PC-3 (cell line): ENCODE measurements at regions of chr14 and their contacts with region 1.

Region 1: GRCh38 chr14:59422069-59422881 is 42.9 kb downstream of the GPR135 start:
- DNase-seq: peak; percentile 62
- ATAC-seq: peak; percentile 39; the same call in 1 of the 2 replicates
- H3K4me3 ChIP-seq: no peak overlapping the region
- H3K27ac ChIP-seq: no peak overlapping the region
- H3K4me1 ChIP-seq: no peaks in the 10 kb centered on the region
- H3K27me3 ChIP-seq: no peaks in the 10 kb centered on the region
- CTCF ChIP-seq: peak; percentile 97

Region 2: GRCh38 chr14:59262717-59263454 is 159.4 kb before region 1 on chr14:
- CTCF ChIA-PET with region 1: no interaction called
- POLR2A ChIA-PET with region 1: no interaction called
- intact Hi-C with region 1: loop called (anchors 5 kb)
- DNase-seq: peak; percentile 77
- ATAC-seq: peak; percentile 99
- H3K4me3 ChIP-seq: no peak overlapping the region
- H3K27ac ChIP-seq: no peak overlapping the region
- H3K4me1 ChIP-seq: peaks cover 23% of the 10 kb centered on the region
- H3K27me3 ChIP-seq: no peaks in the 10 kb centered on the region
- CTCF ChIP-seq: peak; percentile 84

Region 3: DNA sequence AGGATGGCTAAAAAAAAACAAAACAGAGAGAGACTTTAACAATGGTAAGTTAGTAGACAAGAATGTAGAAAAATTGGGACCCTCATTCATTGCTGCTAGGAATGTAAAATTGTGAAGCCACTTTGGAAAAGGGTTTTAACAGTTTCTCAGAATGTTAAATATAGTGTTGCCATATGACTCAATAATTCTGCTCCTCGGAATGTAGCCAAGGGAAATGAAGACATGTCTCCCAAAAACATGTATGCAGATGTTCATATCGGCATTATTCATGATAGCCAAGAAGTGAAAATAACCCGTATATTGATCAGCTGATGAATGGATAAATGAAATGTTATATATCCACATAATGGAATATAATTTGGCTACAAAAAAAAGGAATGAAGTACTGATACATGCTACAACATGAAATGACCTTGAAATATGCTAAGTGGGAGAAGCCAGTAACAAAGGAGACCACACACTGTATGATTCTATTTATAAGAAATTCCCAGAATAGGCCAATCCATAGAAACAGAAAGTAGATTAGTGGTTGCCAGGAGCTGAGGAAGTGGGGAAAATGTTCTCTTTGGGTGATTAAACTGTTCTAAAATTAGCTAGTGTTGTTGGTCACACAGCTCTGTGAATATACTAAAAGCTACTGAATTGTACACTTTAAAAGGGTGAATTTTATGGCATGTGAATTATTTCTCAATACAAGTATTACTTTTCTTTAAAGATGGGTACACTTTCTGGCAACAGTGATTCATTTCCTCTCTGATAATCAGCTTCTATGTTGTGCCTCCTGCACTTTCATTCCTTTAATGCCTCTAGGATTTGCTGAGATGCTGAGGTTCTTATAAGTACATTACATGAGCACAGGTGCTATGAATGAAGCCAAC is 101.3 kb before region 1 on chr14:
- CTCF ChIA-PET with region 1: no interaction called
- POLR2A ChIA-PET with region 1: no interaction called
- intact Hi-C with region 1: loop called (anchors 2 kb)
- DNase-seq: no peak
- ATAC-seq: peak; percentile 96
- H3K4me3 ChIP-seq: no peak overlapping the region
- H3K27ac ChIP-seq: peak overlapping the region; percentile 1
- H3K4me1 ChIP-seq: peaks cover 18% of the 10 kb centered on the region
- H3K27me3 ChIP-seq: no peaks in the 10 kb centered on the region
- CTCF ChIP-seq: no peak